ENCODE measurements at regions of chr4 and their contacts with region 1.

Region 1: GRCh38 chr4:71907782-71908181 is 123.9 kb upstream of the GC start:
- DNase-seq: no peak
- H3K4me3 Mint-ChIP-seq: no peak overlapping the region
- H3K27ac Mint-ChIP-seq: no peak overlapping the region
- H3K4me1 Mint-ChIP-seq: no peaks in the 10 kb centered on the region
- H3K27me3 Mint-ChIP-seq: no peaks in the 10 kb centered on the region

Region 2: GRCh38 chr4:71941001-71941400 is 33.2 kb after region 1 on chr4:
- CTCF ChIA-PET with region 1: no interaction called
- intact Hi-C with region 1: loop called (anchors 1 kb)
- DNase-seq: peak; percentile 4
- H3K4me3 Mint-ChIP-seq: no peak overlapping the region
- H3K27ac Mint-ChIP-seq: no peak overlapping the region
- H3K4me1 Mint-ChIP-seq: no peaks in the 10 kb centered on the region
- H3K27me3 Mint-ChIP-seq: no peaks in the 10 kb centered on the region

Measured in activated naive CD4-positive, alpha-beta T cell treated with anti-CD3 and anti-CD28 coated beads for 36 hours (primary cell).